ENCODE measurements at regions of chr17 and their contacts with region 1.

Region 1: GRCh38 chr17:43694077-43694870 is 32.6 kb upstream of the MEOX1 start:
- DNase-seq: peak; percentile 49 to 86 (median 77)
- ATAC-seq: peak; percentile 99
- H3K4me3 ChIP-seq: no peak overlapping the region
- H3K4me3 Mint-ChIP-seq: no peak overlapping the region
- H3K27ac ChIP-seq: no peak overlapping the region
- H3K27ac Mint-ChIP-seq: no peak overlapping the region
- H3K4me1 ChIP-seq: no peaks in the 10 kb centered on the region
- H3K4me1 Mint-ChIP-seq: no peaks in the 10 kb centered on the region
- H3K27me3 ChIP-seq: no peaks in the 10 kb centered on the region
- H3K27me3 Mint-ChIP-seq: peaks cover 19% of the 10 kb centered on the region
- CTCF ChIP-seq: peak; percentile 85

Region 2: DNA sequence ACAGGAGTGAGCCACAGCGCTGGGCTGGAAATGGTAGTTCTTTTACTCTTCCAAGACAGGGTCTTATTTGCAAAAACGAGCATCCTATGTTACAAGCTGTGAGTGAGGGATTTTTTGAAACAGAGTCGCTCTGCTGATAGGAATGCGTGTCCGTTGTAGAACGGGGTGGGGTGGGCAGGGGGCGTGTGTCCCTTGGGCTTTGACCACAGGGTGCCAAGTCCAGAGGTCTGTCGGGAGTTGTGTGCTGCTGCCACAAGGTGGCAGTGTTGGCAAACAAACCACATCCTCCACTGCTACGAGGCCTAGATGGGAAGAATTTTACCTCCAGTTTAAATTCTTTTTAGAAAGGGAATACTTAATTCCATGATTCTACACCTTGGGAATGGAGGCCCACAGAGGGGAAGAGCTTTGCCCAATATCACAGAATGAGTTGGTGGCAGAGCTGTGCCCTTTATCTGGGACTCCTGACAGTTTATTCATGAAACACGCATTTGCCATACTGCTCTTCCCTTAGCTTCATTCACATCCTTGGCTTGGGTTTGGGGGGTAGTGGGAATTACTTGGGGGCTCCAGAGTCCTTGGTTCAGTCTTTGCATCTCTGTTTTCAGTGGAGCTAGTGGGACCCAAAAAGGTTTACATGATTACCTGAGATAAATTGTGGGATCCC is 117.6 kb before region 1 on chr17:
- CTCF ChIA-PET with region 1: interaction called, 39 read pairs
- POLR2A ChIA-PET with region 1: no interaction called
- intact Hi-C with region 1: no loop called
- DNase-seq: peak; percentile 37 to 83 (median 59)
- ATAC-seq: peak; percentile 71
- H3K4me3 ChIP-seq: no peak overlapping the region
- H3K4me3 Mint-ChIP-seq: no peak overlapping the region
- H3K27ac ChIP-seq: no peak overlapping the region
- H3K27ac Mint-ChIP-seq: no peak overlapping the region
- H3K4me1 ChIP-seq: peaks cover 14% of the 10 kb centered on the region
- H3K4me1 Mint-ChIP-seq: peaks cover 14% of the 10 kb centered on the region
- H3K27me3 ChIP-seq: no peaks in the 10 kb centered on the region
- H3K27me3 Mint-ChIP-seq: peaks cover 2% of the 10 kb centered on the region
- CTCF ChIP-seq: peak; percentile 98

Region 3: GRCh38 chr17:43631429-43631828 is 62.8 kb before region 1 on chr17:
- CTCF ChIA-PET with region 1: no interaction called
- POLR2A ChIA-PET with region 1: no interaction called
- intact Hi-C with region 1: no loop called
- DNase-seq: no peak
- ATAC-seq: no peak
- H3K4me3 ChIP-seq: no peak overlapping the region
- H3K4me3 Mint-ChIP-seq: no peak overlapping the region
- H3K27ac ChIP-seq: no peak overlapping the region
- H3K27ac Mint-ChIP-seq: no peak overlapping the region
- H3K4me1 ChIP-seq: no peaks in the 10 kb centered on the region
- H3K4me1 Mint-ChIP-seq: no peaks in the 10 kb centered on the region
- H3K27me3 ChIP-seq: no peaks in the 10 kb centered on the region
- H3K27me3 Mint-ChIP-seq: peaks cover 6% of the 10 kb centered on the region
- CTCF ChIP-seq: no peak

Region 4: GRCh38 chr17:43683928-43684653 is 10.2 kb before region 1 on chr17:
- CTCF ChIA-PET with region 1: interaction called, 11 read pairs
- POLR2A ChIA-PET with region 1: no interaction called
- intact Hi-C with region 1: no loop called
- DNase-seq: no peak
- ATAC-seq: no peak
- H3K4me3 ChIP-seq: no peak overlapping the region
- H3K4me3 Mint-ChIP-seq: no peak overlapping the region
- H3K27ac ChIP-seq: no peak overlapping the region
- H3K27ac Mint-ChIP-seq: no peak overlapping the region
- H3K4me1 ChIP-seq: no peaks in the 10 kb centered on the region
- H3K4me1 Mint-ChIP-seq: no peaks in the 10 kb centered on the region
- H3K27me3 ChIP-seq: no peaks in the 10 kb centered on the region
- H3K27me3 Mint-ChIP-seq: no peaks in the 10 kb centered on the region
- CTCF ChIP-seq: no peak

Region 5: GRCh38 chr17:43740541-43740940 is 46.3 kb after region 1 on chr17:
- CTCF ChIA-PET with region 1: interaction called, 10 read pairs
- POLR2A ChIA-PET with region 1: no interaction called
- intact Hi-C with region 1: no loop called
- DNase-seq: no peak
- ATAC-seq: no peak
- H3K4me3 ChIP-seq: no peak overlapping the region
- H3K4me3 Mint-ChIP-seq: no peak overlapping the region
- H3K27ac ChIP-seq: no peak overlapping the region
- H3K27ac Mint-ChIP-seq: no peak overlapping the region
- H3K4me1 ChIP-seq: no peaks in the 10 kb centered on the region
- H3K4me1 Mint-ChIP-seq: no peaks in the 10 kb centered on the region
- H3K27me3 ChIP-seq: no peaks in the 10 kb centered on the region
- H3K27me3 Mint-ChIP-seq: peaks cover 41% of the 10 kb centered on the region
- CTCF ChIP-seq: no peak

Region 6: DNA sequence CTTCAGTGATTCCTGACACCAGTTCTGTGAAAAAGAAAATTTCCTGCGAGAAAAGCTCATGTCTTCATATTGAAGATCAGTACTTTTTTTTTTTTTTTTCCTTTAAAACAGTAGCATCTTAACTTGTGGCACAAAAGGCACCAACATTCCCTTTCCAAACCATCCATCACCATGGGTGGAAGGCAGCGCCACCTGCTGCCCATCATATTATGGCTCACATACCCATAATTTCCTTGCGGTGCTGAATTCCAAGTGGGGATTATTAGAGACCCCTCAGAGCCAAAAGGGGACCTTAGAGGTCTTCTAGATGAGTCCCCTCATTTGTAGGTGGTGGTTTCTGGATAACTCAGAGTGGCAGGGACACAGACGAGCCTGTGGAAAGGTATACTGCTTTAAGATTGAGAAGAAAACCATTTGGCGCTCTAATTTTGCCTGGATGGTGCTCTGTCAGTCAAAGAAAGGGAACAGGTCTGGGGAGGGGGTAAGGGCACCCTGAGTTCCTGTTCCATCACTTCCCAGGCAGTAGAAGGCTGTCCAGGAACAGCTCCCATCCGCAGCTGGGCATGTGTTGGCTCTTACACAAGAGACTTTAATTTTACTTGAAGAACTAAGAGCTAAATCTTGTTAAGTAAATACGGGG is 72.3 kb after region 1 on chr17:
- CTCF ChIA-PET with region 1: no interaction called
- POLR2A ChIA-PET with region 1: interaction called, 3 read pairs
- intact Hi-C with region 1: loop called in 1 of 2 experiments (anchors 1 kb)
- DNase-seq: peak in 7 of 9 experiments; percentile 22 to 68 (median 51)
- ATAC-seq: no peak
- H3K4me3 ChIP-seq: no peak overlapping the region
- H3K4me3 Mint-ChIP-seq: no peak overlapping the region
- H3K27ac ChIP-seq: no peak overlapping the region
- H3K27ac Mint-ChIP-seq: no peak overlapping the region
- H3K4me1 ChIP-seq: no peaks in the 10 kb centered on the region
- H3K4me1 Mint-ChIP-seq: no peaks in the 10 kb centered on the region
- H3K27me3 ChIP-seq: no peaks in the 10 kb centered on the region
- H3K27me3 Mint-ChIP-seq: no peaks in the 10 kb centered on the region
- CTCF ChIP-seq: peak; percentile 94